Posterior vena cava (tissue), 2 donors: ENCODE measurements at regions of chr10 and their contacts with region 1.

Region 1: GRCh38 chr10:128125944-128126764 is at the start of gene MKI67:
- DNase-seq: peak; percentile 94
- total RNA-seq, gene MKI67: 0.62 to 2.0 TPM

Region 2: GRCh38 chr10:127450644-127451043 is 675.5 kb before region 1 on chr10:
- intact Hi-C with region 1: no loop called
- DNase-seq: no peak

Region 3: GRCh38 chr10:127889605-127890195 is 236.5 kb before region 1 on chr10:
- intact Hi-C with region 1: no loop called
- DNase-seq: no peak

Region 4: DNA sequence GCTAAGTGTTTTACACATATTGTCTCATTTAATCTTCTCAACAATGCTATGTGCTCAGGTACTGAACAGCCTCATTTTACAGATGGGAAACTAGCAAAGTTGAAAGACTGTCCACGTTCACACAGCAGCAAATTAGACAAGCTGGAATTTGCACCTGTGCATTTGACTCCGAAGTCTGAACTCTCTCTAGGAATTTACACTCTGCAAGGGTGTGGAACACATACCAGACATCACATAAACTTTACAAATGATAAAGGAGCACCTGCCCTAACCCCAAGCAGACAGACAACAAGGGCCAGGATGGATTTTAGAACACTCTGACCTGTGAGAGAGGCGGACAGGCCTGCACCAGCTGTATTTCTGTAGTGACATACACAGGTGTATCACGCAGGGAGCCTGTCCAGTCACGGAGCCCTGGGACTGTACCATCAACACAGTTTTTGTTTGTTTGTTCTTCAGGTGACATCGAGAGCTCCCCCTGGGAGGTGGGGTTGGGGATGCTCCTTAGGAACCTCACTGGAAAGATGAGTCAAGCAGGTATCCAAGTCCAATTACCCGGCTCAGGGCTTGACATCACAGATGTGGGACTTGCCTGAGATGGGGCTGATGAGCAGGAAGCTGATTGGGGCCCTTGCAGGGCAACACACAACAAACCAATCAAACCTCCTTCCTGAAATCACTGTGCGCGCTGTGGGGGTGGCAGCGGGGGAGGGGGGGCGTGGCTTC is 31.0 kb before region 1 on chr10:
- intact Hi-C with region 1: loop called in 1 of 2 experiments (anchors 1 kb)
- DNase-seq: no peak

Region 5: GRCh38 chr10:128111696-128112095 is 14.5 kb before region 1 on chr10:
- intact Hi-C with region 1: no loop called
- DNase-seq: no peak

Region 6: DNA sequence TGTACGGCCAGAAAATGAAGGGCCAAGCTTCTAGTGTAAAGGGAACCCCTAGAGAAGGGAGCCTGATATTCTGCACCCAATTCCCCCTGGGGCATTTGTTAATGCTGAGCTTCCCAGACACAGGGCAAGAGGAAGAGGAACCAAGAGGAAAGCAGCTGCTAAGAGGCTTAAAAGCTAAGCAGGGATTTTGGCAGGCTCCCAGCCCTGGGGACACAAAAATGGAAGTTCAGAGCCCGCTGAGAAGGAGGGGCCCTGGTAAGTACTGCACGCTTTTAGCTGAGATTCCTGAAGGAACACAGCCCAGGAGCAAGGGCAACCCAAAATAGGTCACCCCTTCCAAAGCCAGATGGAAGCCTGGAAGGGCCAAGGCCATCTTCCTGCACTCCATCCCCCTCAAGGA is 953.6 kb after region 1 on chr10:
- intact Hi-C with region 1: loop called in 1 of 2 experiments (anchors 10 kb)
- DNase-seq: no peak

Region 7: DNA sequence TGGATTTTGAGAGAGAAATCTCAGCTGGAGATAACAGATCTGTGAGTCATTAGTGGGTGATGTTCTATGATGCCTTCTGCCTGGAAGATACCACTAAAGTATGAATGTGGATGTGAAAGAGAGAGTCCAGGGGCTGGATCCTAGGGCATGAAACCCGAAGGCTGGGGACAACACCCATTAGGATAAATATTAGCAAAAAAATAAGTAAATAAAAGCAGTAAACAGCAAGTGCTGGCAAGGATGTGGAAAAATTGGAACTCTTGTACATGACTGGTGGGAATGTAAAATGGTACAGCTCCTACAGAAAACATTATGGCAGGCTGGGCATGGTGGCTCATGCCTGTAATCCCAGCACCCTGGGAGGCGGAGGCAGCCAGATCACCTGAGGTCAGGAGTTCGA is 1324.2 kb after region 1 on chr10:
- intact Hi-C with region 1: loop called in 1 of 2 experiments (anchors 5 kb)
- DNase-seq: no peak